ENCODE measurements at regions of chr17 and their contacts with region 1.

Region 1: DNA sequence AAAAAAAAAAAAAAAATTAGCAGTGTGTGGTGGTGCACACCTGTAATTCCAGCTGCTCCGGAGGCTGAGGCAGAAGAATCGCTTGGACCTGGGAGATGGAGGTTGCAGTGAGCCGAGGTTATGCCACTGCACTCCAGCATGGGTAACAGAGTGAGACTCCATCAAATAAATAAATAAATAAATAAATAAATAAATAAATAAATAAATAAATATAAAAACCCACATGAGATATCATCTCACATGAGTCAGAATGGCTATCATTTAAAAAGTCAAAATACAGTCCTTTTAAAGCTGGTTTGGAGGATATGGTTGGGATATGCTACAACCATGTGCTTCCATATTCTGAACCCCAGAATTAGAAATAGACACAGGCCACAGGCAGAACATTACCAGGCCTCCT is 114.3 kb downstream of the WSCD1 start:
- DNase-seq: no peak
- ATAC-seq: no peak
- H3K4me3 ChIP-seq: no peak overlapping the region
- H3K27ac ChIP-seq: no peak overlapping the region
- H3K4me1 ChIP-seq: no peaks in the 10 kb centered on the region
- H3K27me3 ChIP-seq: no peaks in the 10 kb centered on the region
- CTCF ChIP-seq: no peak

Region 2: DNA sequence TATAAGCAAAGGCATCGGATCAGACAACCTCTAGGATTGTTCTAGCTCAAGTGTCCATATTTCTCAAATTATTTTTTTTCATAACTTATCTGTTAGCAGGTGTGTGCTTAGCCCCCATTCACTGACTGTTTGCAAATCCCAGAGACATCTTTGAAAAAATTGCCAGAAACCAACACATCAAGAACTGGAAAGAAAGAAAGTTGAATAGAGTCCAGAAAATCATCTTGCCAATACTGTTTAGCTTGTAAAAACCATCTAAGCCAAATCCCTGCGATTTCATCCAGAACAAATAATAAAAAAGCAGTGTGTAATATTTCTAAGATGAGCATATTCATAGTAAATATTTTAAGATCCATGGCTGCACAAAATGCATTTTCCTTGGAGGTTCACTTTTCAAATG is 49.8 kb before region 1 on chr17:
- intact Hi-C with region 1: loop called in 1 of 2 experiments (anchors 5 kb)
- DNase-seq: no peak
- ATAC-seq: no peak
- H3K4me3 ChIP-seq: no peak overlapping the region
- H3K27ac ChIP-seq: no peak overlapping the region
- H3K4me1 ChIP-seq: no peaks in the 10 kb centered on the region
- H3K27me3 ChIP-seq: no peaks in the 10 kb centered on the region
- CTCF ChIP-seq: no peak